ENCODE measurements at regions of chr7 and their contacts with region 1.

Region 1: DNA sequence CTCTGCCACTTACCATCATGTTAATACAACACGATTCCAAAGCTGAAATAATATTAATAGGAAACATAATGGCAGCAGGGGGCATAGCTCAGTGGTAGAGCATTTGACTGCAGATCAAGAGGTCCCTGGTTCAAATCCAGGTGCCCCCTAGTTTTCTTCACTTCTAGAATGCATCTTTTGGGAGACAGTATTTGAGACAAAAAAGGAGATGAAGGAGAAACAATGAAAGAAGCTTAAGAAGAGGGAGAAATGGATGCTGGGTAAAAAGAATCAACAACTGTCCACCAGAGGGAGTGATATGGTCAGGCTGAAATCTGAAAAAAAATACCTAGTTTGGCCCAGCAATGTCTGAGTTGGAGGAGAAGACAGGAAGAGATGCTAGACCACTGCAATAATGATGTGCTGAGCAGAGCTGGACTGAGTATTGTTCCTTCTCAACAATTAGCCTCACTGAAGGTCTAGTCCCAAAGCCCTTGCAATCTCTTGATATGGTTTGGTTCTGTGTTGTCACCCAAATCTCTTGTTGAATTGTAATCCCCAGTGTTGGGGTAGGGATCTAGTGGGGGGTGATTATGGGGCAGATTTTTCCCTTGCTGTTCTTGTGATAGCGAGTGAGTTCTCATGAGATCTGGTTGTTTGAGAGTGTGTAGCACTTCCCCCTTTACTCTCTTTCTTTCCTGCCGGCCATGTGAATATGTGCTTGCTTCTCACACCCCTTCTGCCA is 48.3 kb downstream of the ZNF783 start:
- DNase-seq: peak; percentile 80
- ATAC-seq: peak; percentile 90
- H3K4me3 ChIP-seq: no peak overlapping the region
- H3K27ac ChIP-seq: no peak overlapping the region
- H3K4me1 ChIP-seq: no peaks in the 10 kb centered on the region
- H3K27me3 ChIP-seq: no peaks in the 10 kb centered on the region
- CTCF ChIP-seq: peak; percentile 78

Region 2: GRCh38 chr7:149218469-149219420 is 91.5 kb before region 1 on chr7:
- CTCF ChIA-PET with region 1: no interaction called
- POLR2A ChIA-PET with region 1: no interaction called
- intact Hi-C with region 1: no loop called
- DNase-seq: no peak
- ATAC-seq: no peak
- H3K4me3 ChIP-seq: no peak overlapping the region
- H3K27ac ChIP-seq: no peak overlapping the region
- H3K4me1 ChIP-seq: 0 out of 2 replicates have a peak, but pooled peaks cover 4% of the 10 kb centered on the region
- H3K27me3 ChIP-seq: no peaks in the 10 kb centered on the region
- CTCF ChIP-seq: no peak

Region 3: DNA sequence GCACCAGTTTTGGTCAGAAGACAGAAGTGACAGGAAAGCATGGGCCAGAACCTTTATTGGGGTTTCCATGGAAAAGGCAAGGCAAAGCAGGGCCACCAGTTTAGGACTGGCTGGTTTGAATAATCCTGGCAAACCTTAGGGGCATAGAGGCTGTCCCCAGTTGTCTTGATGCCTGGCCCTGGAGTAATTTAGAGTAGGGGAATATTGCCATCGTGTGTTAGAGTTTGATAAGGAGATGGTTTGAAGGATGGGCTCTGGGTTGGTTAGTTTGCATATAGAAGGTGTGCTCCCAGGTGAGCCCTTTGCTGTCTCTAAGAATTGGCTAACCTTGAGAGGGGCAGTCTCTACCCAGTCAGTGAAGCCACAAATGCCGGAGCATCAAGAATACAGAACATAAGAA is 71.0 kb after region 1 on chr7:
- CTCF ChIA-PET with region 1: interaction called, 3 read pairs
- POLR2A ChIA-PET with region 1: no interaction called
- intact Hi-C with region 1: loop called (anchors 1 kb)
- DNase-seq: peak; percentile 45
- ATAC-seq: peak; percentile 81
- H3K4me3 ChIP-seq: no peak overlapping the region
- H3K27ac ChIP-seq: no peak overlapping the region
- H3K4me1 ChIP-seq: no peaks in the 10 kb centered on the region
- H3K27me3 ChIP-seq: no peaks in the 10 kb centered on the region
- CTCF ChIP-seq: peak; percentile 48; the same call in 1 of the 2 replicates

Region 4: DNA sequence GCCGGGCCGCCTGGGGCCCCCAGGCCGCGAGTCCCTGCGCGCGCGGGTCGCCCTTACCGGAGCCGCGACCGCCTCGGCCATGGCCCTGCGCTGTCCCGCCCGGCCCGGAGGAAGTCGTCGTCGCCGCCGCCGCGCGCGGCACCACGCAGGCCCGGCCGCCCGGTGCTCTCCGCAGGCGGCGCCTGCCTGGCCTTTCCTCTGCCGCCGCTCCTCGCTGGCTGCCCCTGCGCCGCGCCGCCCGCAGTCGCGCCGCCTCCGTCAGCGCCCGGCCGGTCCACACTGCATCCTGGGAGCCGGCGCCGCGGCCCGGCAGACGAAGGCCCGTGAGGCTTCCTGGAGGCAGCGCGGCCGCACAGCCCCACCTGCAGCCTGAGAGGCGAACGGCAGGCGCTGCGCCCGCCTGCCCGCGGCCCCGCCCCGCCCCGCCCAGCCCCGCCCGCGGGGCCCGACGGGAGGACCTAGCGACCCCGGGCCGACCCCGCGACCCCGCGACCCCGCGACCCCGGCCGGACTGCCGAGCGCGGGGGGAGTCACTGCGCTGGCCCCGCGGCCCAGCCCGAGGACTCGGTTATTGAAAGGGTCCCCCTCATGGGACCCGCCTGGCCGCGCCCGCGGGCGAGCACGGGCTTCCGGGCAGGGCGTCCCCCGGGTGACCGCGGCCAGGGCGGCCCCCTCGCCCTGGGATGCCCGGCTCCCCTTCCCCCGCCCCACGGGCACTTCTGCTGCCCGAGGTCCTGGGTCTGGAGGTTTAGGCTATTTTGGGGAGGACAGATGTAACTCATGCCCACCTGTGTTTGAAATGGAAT is 187.4 kb after region 1 on chr7 and contains the start of gene ZNF746:
- CTCF ChIA-PET with region 1: no interaction called
- POLR2A ChIA-PET with region 1: no interaction called
- intact Hi-C with region 1: loop called (anchors 2 kb)
- DNase-seq: peak; percentile 79
- ATAC-seq: peak; percentile 90
- H3K4me3 ChIP-seq: peak within 1 kb of the TSS; percentile 82
- H3K27ac ChIP-seq: no peak within 1 kb of the TSS
- H3K4me1 ChIP-seq: peaks cover 16% of the 10 kb centered on the region
- H3K27me3 ChIP-seq: no peaks in the 10 kb centered on the region
- CTCF ChIP-seq: peak; percentile 21; the same call in 1 of the 2 replicates
- total RNA-seq, gene ZNF746: 19.6 and 27.4 TPM in 2 replicates

Region 5: GRCh38 chr7:149790146-149790548 is 479.9 kb after region 1 on chr7:
- CTCF ChIA-PET with region 1: no interaction called
- POLR2A ChIA-PET with region 1: no interaction called
- intact Hi-C with region 1: no loop called
- DNase-seq: no peak
- ATAC-seq: no peak
- H3K4me3 ChIP-seq: no peak overlapping the region
- H3K27ac ChIP-seq: no peak overlapping the region
- H3K4me1 ChIP-seq: no peaks in the 10 kb centered on the region
- H3K27me3 ChIP-seq: no peaks in the 10 kb centered on the region
- CTCF ChIP-seq: no peak